Activated CD4-positive, alpha-beta T cell treated with anti-CD3 and anti-CD28 coated beads for 36 hours (primary cell): ENCODE measurements at regions of chr5 and their contacts with region 1.

Region 1: DNA sequence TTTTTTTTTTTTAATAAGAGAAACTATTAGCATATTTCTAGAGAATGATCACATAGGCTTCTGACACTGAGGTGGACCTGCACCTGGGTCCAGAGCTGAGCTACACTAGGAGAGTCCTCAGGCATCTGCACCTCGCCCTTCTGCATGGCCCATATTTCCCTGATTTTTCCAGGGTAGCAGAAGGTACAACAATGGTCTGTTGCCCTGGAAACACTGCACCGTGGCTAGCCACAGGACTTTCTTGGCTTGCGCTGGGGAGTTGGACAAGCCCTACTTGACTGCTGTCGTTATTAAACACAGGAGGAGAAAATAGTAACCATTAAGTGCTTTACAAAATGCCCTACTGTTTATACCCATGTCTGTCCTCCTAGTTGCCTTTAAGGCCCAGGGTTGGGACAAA is 615.7 kb upstream of the MEF2C start:
- DNase-seq: no peak
- ATAC-seq: no peak
- H3K4me3 Mint-ChIP-seq: no peak overlapping the region
- H3K27ac Mint-ChIP-seq: no peak overlapping the region
- H3K4me1 Mint-ChIP-seq: no peaks in the 10 kb centered on the region
- H3K27me3 Mint-ChIP-seq: no peaks in the 10 kb centered on the region

Region 2: DNA sequence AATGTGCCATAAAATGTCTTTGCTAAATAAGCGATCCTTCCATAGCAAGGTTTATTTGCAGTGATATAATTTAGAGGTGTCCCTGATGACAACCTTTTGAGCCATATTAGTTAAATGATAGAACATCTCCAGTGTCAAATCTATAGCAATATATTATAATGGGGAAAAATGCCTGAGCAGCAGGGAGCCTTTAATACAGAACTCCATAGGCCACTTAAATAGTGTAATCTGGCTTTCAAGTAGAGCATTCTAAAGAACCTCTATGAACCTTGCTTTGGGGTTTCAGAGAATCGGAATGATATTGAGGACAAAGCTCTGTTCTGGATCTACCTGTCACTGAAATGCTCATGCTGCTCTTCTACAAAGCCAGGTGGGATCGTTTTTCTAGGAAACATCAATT is 519.0 kb before region 1 on chr5:
- CTCF ChIA-PET with region 1: no interaction called
- POLR2A ChIA-PET with region 1: interaction called, 11 read pairs
- intact Hi-C with region 1: no loop called
- DNase-seq: no peak
- ATAC-seq: no peak
- H3K4me3 Mint-ChIP-seq: no peak overlapping the region
- H3K27ac Mint-ChIP-seq: no peak overlapping the region
- H3K4me1 Mint-ChIP-seq: peaks cover 19% of the 10 kb centered on the region
- H3K27me3 Mint-ChIP-seq: peaks cover 9% of the 10 kb centered on the region

Region 3: DNA sequence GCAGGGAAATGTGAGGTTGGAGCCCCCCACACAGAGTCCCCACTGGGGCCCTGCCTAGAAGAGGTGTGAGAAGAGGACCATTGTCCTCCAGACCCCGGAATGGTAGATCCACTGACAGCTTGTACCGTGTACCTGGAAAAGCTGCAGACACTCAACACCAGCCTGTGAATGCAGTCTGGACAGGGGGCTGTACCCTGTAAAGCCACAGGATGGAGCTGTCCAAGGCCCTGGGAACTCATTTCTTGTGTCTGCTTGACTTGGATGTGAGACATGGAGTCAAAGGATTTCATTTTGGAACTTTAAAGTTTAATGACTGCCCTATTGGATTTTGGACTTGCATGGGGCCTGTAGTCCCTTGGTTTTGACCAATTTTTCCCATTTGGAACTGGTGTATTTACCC is 80.7 kb before region 1 on chr5:
- CTCF ChIA-PET with region 1: no interaction called
- POLR2A ChIA-PET with region 1: no interaction called
- intact Hi-C with region 1: no loop called
- DNase-seq: no peak
- ATAC-seq: no peak
- H3K4me3 Mint-ChIP-seq: no peak overlapping the region
- H3K27ac Mint-ChIP-seq: no peak overlapping the region
- H3K4me1 Mint-ChIP-seq: no peaks in the 10 kb centered on the region
- H3K27me3 Mint-ChIP-seq: no peaks in the 10 kb centered on the region